Mammary epithelial cell (primary cell): ENCODE measurements at regions of chr3 and their contacts with region 1.

Region 1: GRCh38 chr3:192802957-192803899 is 75.9 kb upstream of the FGF12 start:
- DNase-seq: no peak
- H3K4me3 ChIP-seq: no peak overlapping the region
- H3K27ac ChIP-seq: no peak overlapping the region
- H3K4me1 ChIP-seq: no peaks in the 10 kb centered on the region
- H3K27me3 ChIP-seq: no peaks in the 10 kb centered on the region
- CTCF ChIP-seq: peak; percentile 44 to 65

Region 2: GRCh38 chr3:192816351-192816750 is 13.1 kb after region 1 on chr3:
- CTCF ChIA-PET with region 1: no interaction called
- dilution Hi-C with region 1: no loop called
- in situ Hi-C with region 1: no loop called
- intact Hi-C with region 1: no loop called
- DNase-seq: peak; percentile 47
- H3K4me3 ChIP-seq: no peak overlapping the region
- H3K27ac ChIP-seq: no peak overlapping the region
- H3K4me1 ChIP-seq: peaks cover 30% of the 10 kb centered on the region
- H3K27me3 ChIP-seq: no peaks in the 10 kb centered on the region
- CTCF ChIP-seq: peak; percentile 49 to 63

Region 3: GRCh38 chr3:193452338-193452737 is 649.1 kb after region 1 on chr3:
- CTCF ChIA-PET with region 1: no interaction called
- dilution Hi-C with region 1: no loop called
- in situ Hi-C with region 1: loop called in 1 of 2 experiments (anchors 25 kb)
- intact Hi-C with region 1: no loop called
- DNase-seq: no peak
- H3K4me3 ChIP-seq: no peak overlapping the region
- H3K27ac ChIP-seq: no peak overlapping the region
- H3K4me1 ChIP-seq: peaks cover 3% of the 10 kb centered on the region
- H3K27me3 ChIP-seq: peaks cover 3% of the 10 kb centered on the region
- CTCF ChIP-seq: peak; percentile 13 to 56